Calu3 (cell line): ENCODE measurements at regions of chr1 and their contacts with region 1.

Region 1: DNA sequence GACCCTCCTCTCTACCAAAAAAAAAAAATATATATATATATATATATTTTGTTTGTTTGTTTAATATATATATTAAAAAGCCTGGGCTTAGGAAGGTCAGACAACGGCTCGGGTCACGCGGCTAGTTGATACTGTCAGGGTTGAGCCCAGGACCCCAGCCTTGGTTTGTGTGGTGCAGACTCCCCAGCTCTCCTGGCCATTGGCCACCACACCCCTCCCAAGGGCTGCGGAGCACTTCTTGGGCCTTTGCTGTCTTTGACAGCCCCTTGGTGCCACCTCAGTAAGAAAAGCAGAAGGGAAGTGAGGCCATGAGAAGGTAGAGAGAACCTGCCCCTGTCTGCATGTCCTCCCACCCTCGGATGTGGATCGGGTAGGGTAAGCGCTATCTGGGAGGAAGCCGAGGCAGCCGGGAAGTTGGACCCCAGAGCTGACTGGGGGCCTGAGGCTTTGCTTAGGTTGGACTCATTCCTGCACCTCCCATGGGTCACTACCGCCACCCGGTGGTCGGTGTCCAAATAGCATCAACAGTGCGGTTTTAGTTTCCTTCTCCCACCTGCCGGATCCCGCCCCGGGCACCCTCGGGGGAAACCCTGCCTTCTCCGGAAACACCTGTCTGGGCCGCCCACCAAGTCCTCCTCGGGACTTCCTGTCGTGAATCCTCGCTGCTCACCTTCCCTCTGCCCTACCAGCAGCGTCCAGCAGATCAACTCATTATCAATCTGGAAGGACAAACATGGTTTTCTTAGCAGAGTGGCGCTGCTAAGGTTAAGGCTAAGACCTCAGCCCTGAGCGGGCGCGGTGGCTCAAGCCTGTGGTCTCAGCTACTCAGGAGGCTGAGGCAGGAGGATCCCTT is 29.8 kb upstream of the GNPAT start:
- DNase-seq: peak; percentile 98
- H3K4me3 Mint-ChIP-seq: peak overlapping the region; percentile 86
- H3K27ac Mint-ChIP-seq: peak overlapping the region; percentile 80
- H3K4me1 Mint-ChIP-seq: peaks cover 18% of the 10 kb centered on the region
- H3K27me3 Mint-ChIP-seq: no peaks in the 10 kb centered on the region
- CTCF ChIP-seq: peak; percentile 96

Region 2: GRCh38 chr1:230797942-230798418 is 413.3 kb before region 1 on chr1:
- CTCF ChIA-PET with region 1: no interaction called
- intact Hi-C with region 1: loop called (anchors 1 kb)
- DNase-seq: peak; percentile 73
- H3K4me3 Mint-ChIP-seq: no peak overlapping the region
- H3K27ac Mint-ChIP-seq: no peak overlapping the region
- H3K4me1 Mint-ChIP-seq: no peaks in the 10 kb centered on the region
- H3K27me3 Mint-ChIP-seq: no peaks in the 10 kb centered on the region
- CTCF ChIP-seq: peak; percentile 81

Region 3: GRCh38 chr1:230917284-230918135 is 293.7 kb before region 1 on chr1:
- CTCF ChIA-PET with region 1: interaction called, 3 read pairs
- intact Hi-C with region 1: loop called (anchors 1 kb)
- DNase-seq: peak; percentile 80
- H3K4me3 Mint-ChIP-seq: no peak overlapping the region
- H3K27ac Mint-ChIP-seq: no peak overlapping the region
- H3K4me1 Mint-ChIP-seq: no peaks in the 10 kb centered on the region
- H3K27me3 Mint-ChIP-seq: no peaks in the 10 kb centered on the region
- CTCF ChIP-seq: peak; percentile 61

Region 4: GRCh38 chr1:230978491-230979388 is 232.5 kb before region 1 on chr1 and contains the starts of genes ARV1 and TTC13:
- CTCF ChIA-PET with region 1: no interaction called
- intact Hi-C with region 1: loop called (anchors 5 kb)
- DNase-seq: peak; percentile 100
- H3K4me3 Mint-ChIP-seq: no peak within 1 kb of the TSS
- H3K27ac Mint-ChIP-seq: peak within 1 kb of the TSS; percentile 88
- H3K4me1 Mint-ChIP-seq: no peaks in the 10 kb centered on the region
- H3K27me3 Mint-ChIP-seq: no peaks in the 10 kb centered on the region
- CTCF ChIP-seq: peak; percentile 34
- total RNA-seq, gene ARV1: 17.1 and 19.4 TPM in 2 replicates
- total RNA-seq, gene TTC13: 29.0 and 35.6 TPM in 2 replicates

Region 5: GRCh38 chr1:231013391-231014018 is 197.7 kb before region 1 on chr1:
- CTCF ChIA-PET with region 1: interaction called, 9 read pairs
- intact Hi-C with region 1: loop called (anchors 2 kb)
- DNase-seq: no peak
- H3K4me3 Mint-ChIP-seq: no peak overlapping the region
- H3K27ac Mint-ChIP-seq: no peak overlapping the region
- H3K4me1 Mint-ChIP-seq: no peaks in the 10 kb centered on the region
- H3K27me3 Mint-ChIP-seq: no peaks in the 10 kb centered on the region
- CTCF ChIP-seq: no peak

Region 6: DNA sequence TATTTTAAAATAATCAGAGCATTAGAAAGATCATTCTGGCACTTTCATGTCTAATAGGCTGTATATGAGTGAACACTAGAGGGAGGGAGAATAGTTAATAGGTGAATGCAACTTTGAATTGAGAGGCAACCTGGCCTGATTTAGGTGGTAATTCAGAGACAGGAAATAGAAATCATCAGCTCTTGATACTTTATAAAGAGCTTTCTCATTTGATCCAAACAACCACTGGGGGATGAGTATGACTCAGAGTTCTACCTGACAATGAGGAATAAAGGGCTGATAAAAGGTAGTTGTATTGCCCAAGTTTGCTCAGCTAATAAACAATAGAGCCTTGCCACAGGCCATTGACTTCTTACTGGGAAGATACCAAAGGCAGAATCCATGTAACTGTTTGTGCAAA is 165.9 kb before region 1 on chr1:
- CTCF ChIA-PET with region 1: no interaction called
- intact Hi-C with region 1: loop called (anchors 5 kb)
- DNase-seq: no peak
- H3K4me3 Mint-ChIP-seq: no peak overlapping the region
- H3K27ac Mint-ChIP-seq: no peak overlapping the region
- H3K4me1 Mint-ChIP-seq: peaks cover 27% of the 10 kb centered on the region
- H3K27me3 Mint-ChIP-seq: peaks cover 46% of the 10 kb centered on the region
- CTCF ChIP-seq: peak; percentile 13

Region 7: GRCh38 chr1:231093156-231093922 is 117.9 kb before region 1 on chr1:
- CTCF ChIA-PET with region 1: no interaction called
- intact Hi-C with region 1: loop called (anchors 1 kb)
- DNase-seq: no peak
- H3K4me3 Mint-ChIP-seq: no peak overlapping the region
- H3K27ac Mint-ChIP-seq: no peak overlapping the region
- H3K4me1 Mint-ChIP-seq: no peaks in the 10 kb centered on the region
- H3K27me3 Mint-ChIP-seq: peaks cover 30% of the 10 kb centered on the region
- CTCF ChIP-seq: no peak